ENCODE measurements at regions of chr7 and their contacts with region 1.

Region 1: GRCh38 chr7:135672560-135673359 is 10.4 kb downstream of the STMP1 start:
- DNase-seq: no peak
- ATAC-seq: peak; percentile 68 to 78 (median 72)
- H3K4me3 ChIP-seq: no peak overlapping the region
- H3K27ac ChIP-seq: peak overlapping the region; percentile 59
- H3K4me1 ChIP-seq: peaks cover 77% of the 10 kb centered on the region
- H3K27me3 ChIP-seq: no peaks in the 10 kb centered on the region
- CTCF ChIP-seq: peak; percentile 78

Region 2: GRCh38 chr7:135708036-135708435 is 35.3 kb after region 1 on chr7:
- intact Hi-C with region 1: loop called in 1 of 2 experiments (anchors 5 kb)
- DNase-seq: no peak
- ATAC-seq: no peak
- H3K4me3 ChIP-seq: no peak overlapping the region
- H3K27ac ChIP-seq: no peak overlapping the region
- H3K4me1 ChIP-seq: no peaks in the 10 kb centered on the region
- H3K27me3 ChIP-seq: no peaks in the 10 kb centered on the region
- CTCF ChIP-seq: no peak

Region 3: GRCh38 chr7:135757719-135758411 is 85.1 kb after region 1 on chr7:
- intact Hi-C with region 1: loop called in 1 of 2 experiments (anchors 5 kb)
- DNase-seq: peak in 1 of 2 donors; percentile 49
- ATAC-seq: no peak
- H3K4me3 ChIP-seq: peak overlapping the region; percentile 39
- H3K27ac ChIP-seq: peak overlapping the region; percentile 32
- H3K4me1 ChIP-seq: peaks cover 7% of the 10 kb centered on the region
- H3K27me3 ChIP-seq: peaks cover 0 to 5% (median 0%) of the 10 kb centered on the region in 3 donors
- CTCF ChIP-seq: no peak

Region 4: GRCh38 chr7:136009488-136010079 is 336.8 kb after region 1 on chr7:
- intact Hi-C with region 1: loop called in 1 of 2 experiments (anchors 5 kb)
- DNase-seq: no peak
- ATAC-seq: peak in 3 of 4 donors; percentile 36 to 62 (median 45)
- H3K4me3 ChIP-seq: no peak overlapping the region
- H3K27ac ChIP-seq: no peak overlapping the region
- H3K4me1 ChIP-seq: no peaks in the 10 kb centered on the region
- H3K27me3 ChIP-seq: no peaks in the 10 kb centered on the region
- CTCF ChIP-seq: peak; percentile 86

Region 5: GRCh38 chr7:136056651-136057231 is 384.0 kb after region 1 on chr7:
- intact Hi-C with region 1: no loop called
- DNase-seq: no peak
- ATAC-seq: no peak
- H3K4me3 ChIP-seq: no peak overlapping the region
- H3K27ac ChIP-seq: no peak overlapping the region
- H3K4me1 ChIP-seq: no peaks in the 10 kb centered on the region
- H3K27me3 ChIP-seq: no peaks in the 10 kb centered on the region
- CTCF ChIP-seq: no peak

Measured in psoas muscle (tissue), 8 donors.